H1 (cell line): ENCODE measurements at regions of chr1 and their contacts with region 1.

Region 1: DNA sequence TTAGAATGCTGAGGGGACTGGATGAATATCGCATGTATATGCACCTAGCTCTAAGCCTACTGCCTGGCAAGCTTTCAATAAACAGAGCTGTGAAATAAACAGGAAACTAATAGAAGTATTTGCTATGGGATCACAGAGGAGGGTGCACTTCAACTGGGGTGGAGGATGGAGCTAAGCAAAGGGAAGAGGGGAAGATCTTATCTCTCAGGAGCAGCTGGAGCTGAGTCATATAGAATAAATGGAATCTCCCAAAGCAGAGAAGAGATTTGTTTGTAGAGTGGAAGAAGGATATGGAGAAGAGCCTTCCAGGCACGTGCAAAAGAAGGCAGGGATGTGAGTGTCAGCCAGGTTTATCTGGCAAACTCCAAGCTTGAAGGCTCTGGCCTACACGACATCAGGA is 17.0 kb upstream of the KCNA10 start:
- DNase-seq: no peak
- H3K4me3 ChIP-seq: no peak overlapping the region
- H3K27ac ChIP-seq: no peak overlapping the region
- H3K4me1 ChIP-seq: no peaks in the 10 kb centered on the region
- H3K27me3 ChIP-seq: peaks cover 0 to 5% (median 0%) of the 10 kb centered on the region in 4 experiments; a peak in 1 of 7 replicates
- CTCF ChIP-seq: no peak
- EP300 ChIP-seq: no peak
- POLR2A ChIP-seq: no peak
- RAD21 ChIP-seq: no peak

Region 2: DNA sequence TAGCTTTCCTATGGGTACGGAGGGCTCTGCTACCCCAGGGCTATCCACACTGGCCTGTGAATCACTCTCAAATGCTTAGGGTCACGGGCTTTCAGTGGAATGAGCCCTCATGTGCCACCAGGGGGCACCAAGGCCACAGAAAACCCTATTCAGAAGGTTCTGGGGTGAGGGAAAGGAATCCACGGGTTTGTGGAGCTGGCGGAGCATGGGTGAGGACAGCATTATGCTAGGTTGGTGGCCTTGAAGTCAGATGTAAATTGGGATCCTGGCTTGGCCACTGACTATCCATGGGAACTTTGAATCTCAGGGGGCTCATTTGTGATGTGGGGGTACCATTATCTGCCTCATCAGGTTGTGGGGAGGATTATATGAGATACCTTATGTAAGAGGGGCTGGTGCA is 123.4 kb before region 1 on chr1:
- CTCF ChIA-PET with region 1: no interaction called
- POLR2A ChIA-PET with region 1: no interaction called
- DNase-seq: peak in 1 of 2 experiments; percentile 79
- H3K4me3 ChIP-seq: no peak overlapping the region
- H3K27ac ChIP-seq: no peak overlapping the region
- H3K4me1 ChIP-seq: peaks cover 0 to 4% (median 0%) of the 10 kb centered on the region in 4 experiments; a peak in 4 of 7 replicates
- H3K27me3 ChIP-seq: 0 out of 7 replicates have a peak, but pooled peaks cover 0 to 3% (median 0%) of the 10 kb centered on the region in 4 experiments
- CTCF ChIP-seq: peak; percentile 76 to 89 (median 89)
- EP300 ChIP-seq: no peak
- POLR2A ChIP-seq: no peak
- RAD21 ChIP-seq: peak; percentile 88 to 97

Region 3: GRCh38 chr1:110433803-110434202 is 102.2 kb before region 1 on chr1:
- CTCF ChIA-PET with region 1: no interaction called
- POLR2A ChIA-PET with region 1: no interaction called
- DNase-seq: peak; percentile 38 to 66
- H3K4me3 ChIP-seq: no peak overlapping the region
- H3K27ac ChIP-seq: no peak overlapping the region
- H3K4me1 ChIP-seq: peaks cover 3 to 9% (median 7%) of the 10 kb centered on the region in 4 experiments; a peak in 6 of 7 replicates
- H3K27me3 ChIP-seq: no peaks in the 10 kb centered on the region
- CTCF ChIP-seq: no peak
- EP300 ChIP-seq: no peak
- POLR2A ChIP-seq: no peak
- RAD21 ChIP-seq: peak in 1 of 2 experiments; percentile 25; a peak in 1 of 4 replicates

Region 4: DNA sequence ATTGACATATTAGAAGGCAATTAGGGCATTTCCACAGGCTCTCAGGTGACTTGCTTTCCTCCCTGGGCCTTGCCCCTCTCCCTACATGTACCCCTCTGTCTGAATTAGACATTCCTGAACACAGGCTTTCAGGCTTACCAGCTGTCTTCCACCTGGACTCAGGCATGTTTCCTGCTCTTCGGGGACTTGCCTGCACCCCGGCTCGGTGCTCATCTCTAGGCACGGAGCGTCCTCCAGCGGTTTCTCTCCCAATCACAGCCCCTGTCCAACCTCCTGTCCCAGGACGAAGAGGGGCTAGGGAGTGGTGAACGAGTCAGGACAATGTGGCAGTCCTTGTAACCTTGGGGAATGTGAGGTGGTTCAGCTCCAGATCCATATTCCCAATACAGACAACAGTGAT is 80.8 kb before region 1 on chr1:
- CTCF ChIA-PET with region 1: no interaction called
- POLR2A ChIA-PET with region 1: no interaction called
- DNase-seq: peak in 1 of 2 experiments; percentile 73
- H3K4me3 ChIP-seq: no peak overlapping the region
- H3K27ac ChIP-seq: no peak overlapping the region
- H3K4me1 ChIP-seq: peaks cover 0 to 3% (median 2%) of the 10 kb centered on the region in 4 experiments; a peak in 4 of 7 replicates
- H3K27me3 ChIP-seq: no peaks in the 10 kb centered on the region
- CTCF ChIP-seq: peak; percentile 80 to 91 (median 84)
- EP300 ChIP-seq: no peak
- POLR2A ChIP-seq: no peak
- RAD21 ChIP-seq: peak; percentile 96 to 98

Region 5: DNA sequence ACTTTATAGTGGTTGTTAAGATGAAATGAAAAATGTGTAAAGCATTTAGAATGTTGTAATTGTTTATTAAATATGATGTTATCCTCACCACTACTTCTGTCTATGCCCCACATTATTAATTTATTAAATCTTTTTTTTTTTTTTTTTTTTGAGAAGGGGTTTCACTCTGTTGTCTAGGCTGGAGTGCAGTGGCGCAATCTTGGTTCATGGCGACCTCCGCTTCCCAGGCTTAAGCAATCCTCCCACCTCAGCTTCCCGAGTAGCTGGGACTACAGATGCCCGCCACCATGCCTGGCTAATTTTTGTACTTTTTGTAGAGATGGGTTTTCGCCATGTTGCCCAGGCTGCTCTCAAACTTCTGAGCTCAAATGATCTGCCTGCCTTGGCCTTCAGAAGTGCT is 24.5 kb before region 1 on chr1:
- CTCF ChIA-PET with region 1: no interaction called
- POLR2A ChIA-PET with region 1: no interaction called
- DNase-seq: no peak
- H3K4me3 ChIP-seq: no peak overlapping the region
- H3K27ac ChIP-seq: no peak overlapping the region
- H3K4me1 ChIP-seq: peaks cover 0 to 14% (median 6%) of the 10 kb centered on the region in 4 experiments; a peak in 5 of 7 replicates
- H3K27me3 ChIP-seq: no peaks in the 10 kb centered on the region; a peak in 1 of 7 replicates
- CTCF ChIP-seq: no peak
- EP300 ChIP-seq: no peak
- POLR2A ChIP-seq: no peak
- RAD21 ChIP-seq: no peak

Region 6: GRCh38 chr1:110612065-110612751 is 76.2 kb after region 1 on chr1:
- CTCF ChIA-PET with region 1: interaction called, 189 read pairs
- POLR2A ChIA-PET with region 1: no interaction called
- DNase-seq: no peak
- H3K4me3 ChIP-seq: no peak overlapping the region
- H3K27ac ChIP-seq: no peak overlapping the region
- H3K4me1 ChIP-seq: peaks cover 0 to 7% (median 2%) of the 10 kb centered on the region in 4 experiments; a peak in 4 of 7 replicates
- H3K27me3 ChIP-seq: peaks cover 25 to 42% (median 37%) of the 10 kb centered on the region in 4 experiments
- CTCF ChIP-seq: no peak
- EP300 ChIP-seq: no peak
- POLR2A ChIP-seq: no peak
- RAD21 ChIP-seq: no peak